ENCODE measurements at regions of chr2 and their contacts with region 1.

Region 1: GRCh38 chr2:69724540-69725159 is 17.3 kb upstream of the ANXA4 start:
- DNase-seq: peak; percentile 87
- H3K4me3 Mint-ChIP-seq: peak overlapping the region; percentile 41
- H3K27ac Mint-ChIP-seq: no peak overlapping the region
- H3K4me1 Mint-ChIP-seq: peaks cover 6% of the 10 kb centered on the region
- H3K27me3 Mint-ChIP-seq: no peaks in the 10 kb centered on the region

Region 2: GRCh38 chr2:69581774-69582581 is 142.7 kb before region 1 on chr2:
- CTCF ChIA-PET with region 1: interaction called, 10 read pairs
- POLR2A ChIA-PET with region 1: no interaction called
- DNase-seq: no peak
- H3K4me3 Mint-ChIP-seq: peak overlapping the region; percentile 5
- H3K27ac Mint-ChIP-seq: no peak overlapping the region
- H3K4me1 Mint-ChIP-seq: peaks cover 73% of the 10 kb centered on the region
- H3K27me3 Mint-ChIP-seq: no peaks in the 10 kb centered on the region

Region 3: DNA sequence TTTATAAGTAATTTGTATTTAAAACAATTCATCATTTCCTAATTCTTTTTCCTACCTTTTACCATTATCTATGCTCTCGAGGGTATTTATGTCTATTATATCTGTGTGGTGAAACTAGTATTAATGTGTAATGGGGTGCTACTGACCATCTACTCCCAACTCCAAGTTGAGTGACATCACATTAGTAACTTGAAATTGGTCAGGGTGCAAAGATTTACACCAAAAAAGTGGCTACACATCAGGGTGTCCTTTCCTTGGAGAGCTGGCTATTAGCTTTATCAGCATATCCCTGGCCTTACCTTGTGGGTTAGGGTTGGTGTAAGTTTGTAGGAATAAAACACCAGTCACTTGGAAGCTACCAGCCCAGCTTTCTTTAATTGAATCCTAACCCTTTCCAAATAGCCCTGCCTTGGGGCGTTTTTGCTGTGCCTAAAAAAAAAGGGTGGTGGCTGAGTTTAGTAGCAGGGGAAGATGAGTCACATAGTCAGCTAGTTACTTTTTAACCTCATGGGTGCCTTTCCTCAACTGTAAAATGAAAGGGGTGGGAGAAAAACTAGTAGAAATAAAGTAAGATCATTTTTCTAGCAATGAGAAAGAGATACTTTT is 31.3 kb after region 1 on chr2:
- CTCF ChIA-PET with region 1: interaction called, 13 read pairs
- POLR2A ChIA-PET with region 1: no interaction called
- DNase-seq: peak; percentile 38
- H3K4me3 Mint-ChIP-seq: no peak overlapping the region
- H3K27ac Mint-ChIP-seq: peak overlapping the region; percentile 65
- H3K4me1 Mint-ChIP-seq: peaks cover 28% of the 10 kb centered on the region
- H3K27me3 Mint-ChIP-seq: no peaks in the 10 kb centered on the region

Region 4: GRCh38 chr2:69798909-69799526 is 74.4 kb after region 1 on chr2:
- CTCF ChIA-PET with region 1: interaction called, 13 read pairs
- POLR2A ChIA-PET with region 1: no interaction called
- DNase-seq: no peak
- H3K4me3 Mint-ChIP-seq: no peak overlapping the region
- H3K27ac Mint-ChIP-seq: no peak overlapping the region
- H3K4me1 Mint-ChIP-seq: peaks cover 24% of the 10 kb centered on the region
- H3K27me3 Mint-ChIP-seq: no peaks in the 10 kb centered on the region

Region 5: GRCh38 chr2:69829256-69830046 is 104.8 kb after region 1 on chr2 and contains the start of gene GMCL1:
- CTCF ChIA-PET with region 1: interaction called, 46 read pairs
- POLR2A ChIA-PET with region 1: interaction called, 4 read pairs
- DNase-seq: peak; percentile 99
- H3K4me3 Mint-ChIP-seq: peak within 1 kb of the TSS; percentile 85
- H3K27ac Mint-ChIP-seq: peak within 1 kb of the TSS; percentile 93
- H3K4me1 Mint-ChIP-seq: peaks cover 51% of the 10 kb centered on the region
- H3K27me3 Mint-ChIP-seq: no peaks in the 10 kb centered on the region
- total RNA-seq, gene GMCL1: 30.1 to 34.8 TPM

Region 6: GRCh38 chr2:69893684-69894551 is 169.3 kb after region 1 on chr2 and contains the start of gene SNRNP27:
- CTCF ChIA-PET with region 1: interaction called, 16 read pairs
- POLR2A ChIA-PET with region 1: interaction called, 6 read pairs
- DNase-seq: peak; percentile 84
- H3K4me3 Mint-ChIP-seq: peak within 1 kb of the TSS; percentile 96
- H3K27ac Mint-ChIP-seq: peak within 1 kb of the TSS; percentile 94
- H3K4me1 Mint-ChIP-seq: peaks cover 44% of the 10 kb centered on the region
- H3K27me3 Mint-ChIP-seq: no peaks in the 10 kb centered on the region
- total RNA-seq, gene SNRNP27: 59.3 to 63.3 TPM

Region 7: DNA sequence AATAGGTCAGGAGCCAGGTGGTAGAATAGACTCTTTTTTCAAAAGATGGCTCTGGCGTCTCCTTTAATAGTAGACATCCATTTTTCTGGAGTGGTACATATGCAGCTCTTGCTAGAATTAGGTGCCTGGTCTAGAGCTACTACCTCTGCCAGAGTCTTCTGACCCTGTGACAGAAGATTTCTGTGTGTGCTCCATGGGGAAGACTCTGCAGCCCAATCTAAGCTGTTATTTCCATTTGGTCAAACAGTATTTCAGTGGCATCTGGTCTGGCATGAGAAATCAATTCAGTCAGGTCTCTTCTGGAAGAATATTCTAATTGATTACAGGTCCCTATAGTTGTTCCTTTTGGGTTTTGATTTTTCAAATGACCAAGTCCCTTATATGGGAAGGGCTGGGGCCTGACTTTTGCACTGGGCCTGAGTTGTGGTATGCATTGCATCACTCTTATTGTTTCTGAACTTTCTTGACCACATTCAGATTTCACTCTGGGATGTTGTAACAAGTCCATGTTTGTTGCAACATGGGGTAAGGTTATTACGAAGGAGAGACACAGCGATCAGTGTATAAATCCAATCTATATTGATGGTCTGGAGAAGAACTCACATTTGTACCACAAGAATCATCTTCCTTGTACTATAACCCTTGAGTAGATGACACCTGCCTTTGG is 202.3 kb after region 1 on chr2:
- CTCF ChIA-PET with region 1: no interaction called
- POLR2A ChIA-PET with region 1: no interaction called
- DNase-seq: no peak
- H3K4me3 Mint-ChIP-seq: no peak overlapping the region
- H3K27ac Mint-ChIP-seq: no peak overlapping the region
- H3K4me1 Mint-ChIP-seq: peaks cover 36% of the 10 kb centered on the region
- H3K27me3 Mint-ChIP-seq: no peaks in the 10 kb centered on the region

Measured in activated CD4-positive, alpha-beta memory T cell treated with anti-CD3 and anti-CD28 coated beads, Interleukin-2, amount 10 ng/mL, durations not matched to agents 7 days and 5 days (primary cell).